ENCODE measurements at regions of chr1 and their contacts with region 1.

Region 1: GRCh38 chr1:6026095-6026809 is 19.4 kb upstream of the KCNAB2 start:
- DNase-seq: peak; percentile 90
- H3K4me3 Mint-ChIP-seq: peak overlapping the region; percentile 97
- H3K27ac Mint-ChIP-seq: peak overlapping the region; percentile 94
- H3K4me1 Mint-ChIP-seq: peaks cover 50% of the 10 kb centered on the region
- H3K27me3 Mint-ChIP-seq: no peaks in the 10 kb centered on the region

Region 2: GRCh38 chr1:5915587-5916571 is 110.4 kb before region 1 on chr1:
- intact Hi-C with region 1: loop called (anchors 1 kb)
- DNase-seq: no peak
- H3K4me3 Mint-ChIP-seq: no peak overlapping the region
- H3K27ac Mint-ChIP-seq: peak overlapping the region; percentile 64
- H3K4me1 Mint-ChIP-seq: peaks cover 9% of the 10 kb centered on the region
- H3K27me3 Mint-ChIP-seq: no peaks in the 10 kb centered on the region

Region 3: DNA sequence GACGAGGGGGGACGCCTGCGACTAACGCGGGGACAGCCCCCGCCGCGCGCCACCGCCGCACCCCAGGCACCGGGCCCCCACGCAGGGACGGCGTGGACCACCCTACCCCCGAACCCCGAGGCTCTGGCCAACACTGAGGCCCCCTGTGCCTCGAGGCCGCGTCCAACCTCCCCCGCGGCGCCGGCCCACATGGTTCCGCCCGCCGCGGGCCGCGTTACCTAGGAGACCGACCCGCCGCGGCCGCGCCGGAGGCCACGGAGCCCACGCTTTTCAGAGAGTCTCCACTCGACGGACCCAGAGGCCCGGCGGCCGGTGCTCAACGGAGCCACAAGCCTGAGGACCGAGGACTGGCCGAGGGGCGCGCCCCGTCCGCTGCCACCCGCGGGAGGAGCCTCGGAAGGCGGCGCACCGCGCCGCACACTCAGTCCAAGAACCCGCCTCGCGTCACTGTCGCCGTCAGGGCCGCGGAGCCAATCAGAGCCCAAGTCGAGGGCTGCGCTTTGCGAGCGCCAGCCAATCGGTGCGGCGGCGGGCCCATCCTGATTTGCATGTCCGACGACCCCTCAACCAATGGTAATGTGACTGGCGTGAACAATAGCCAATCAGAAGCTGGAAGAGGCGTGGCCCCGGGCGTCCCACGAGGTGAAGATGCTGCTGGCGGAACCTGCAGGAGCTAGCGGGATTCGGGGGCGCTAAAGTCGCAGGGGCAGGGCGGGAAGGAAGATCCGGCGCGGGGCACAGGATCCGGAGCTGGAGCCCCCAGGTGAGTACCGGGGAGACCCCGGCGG is 34.0 kb before region 1 on chr1 and contains the start of gene NPHP4:
- intact Hi-C with region 1: loop called (anchors 1 kb)
- DNase-seq: peak; percentile 100
- H3K4me3 Mint-ChIP-seq: peak within 1 kb of the TSS; percentile 95
- H3K27ac Mint-ChIP-seq: peak within 1 kb of the TSS; percentile 98
- H3K4me1 Mint-ChIP-seq: peaks cover 38% of the 10 kb centered on the region
- H3K27me3 Mint-ChIP-seq: no peaks in the 10 kb centered on the region
- total RNA-seq, gene NPHP4: 18.3 and 18.6 TPM in 2 replicates

Region 4: DNA sequence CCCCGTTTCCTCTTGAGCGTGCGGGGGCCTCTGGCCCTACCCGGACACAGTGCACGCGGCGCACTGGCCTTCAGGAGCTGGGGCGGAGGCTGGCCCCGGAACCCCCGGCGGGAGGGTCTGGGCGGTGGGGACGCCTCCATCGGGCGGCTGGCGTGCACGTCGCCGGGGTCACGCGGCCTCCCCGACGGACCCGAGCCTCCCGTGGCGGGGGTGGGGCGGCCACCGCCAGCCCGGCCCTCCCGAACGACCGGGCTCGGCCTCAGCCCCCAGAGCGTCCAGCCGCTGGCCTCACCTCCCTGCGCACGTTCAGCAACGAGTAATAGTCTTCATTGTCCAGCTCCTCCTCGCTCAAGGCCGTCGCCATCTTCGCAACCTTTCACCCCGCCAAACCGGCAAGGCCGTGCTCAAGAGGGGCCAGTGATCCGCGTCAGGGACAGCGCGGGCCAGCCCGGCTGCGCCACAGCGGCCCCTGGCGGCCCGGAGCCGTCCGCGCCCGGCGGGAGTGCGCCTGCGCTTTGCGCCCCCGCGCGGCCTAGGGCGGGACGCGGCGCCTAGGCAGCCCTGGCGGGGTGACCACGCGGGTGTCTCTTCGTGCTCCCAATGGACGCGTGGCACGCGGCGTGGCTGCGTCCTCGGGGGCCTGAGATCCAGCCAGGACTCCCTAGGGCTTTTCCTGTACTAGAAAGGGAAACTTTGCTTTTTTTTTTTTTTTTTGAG is 675.3 kb after region 1 on chr1 and contains the start of gene DNAJC11:
- intact Hi-C with region 1: loop called (anchors 5 kb)
- DNase-seq: peak; percentile 92
- H3K4me3 Mint-ChIP-seq: peak within 1 kb of the TSS; percentile 92
- H3K27ac Mint-ChIP-seq: peak within 1 kb of the TSS; percentile 96
- H3K4me1 Mint-ChIP-seq: peaks cover 27% of the 10 kb centered on the region
- H3K27me3 Mint-ChIP-seq: no peaks in the 10 kb centered on the region
- total RNA-seq, gene DNAJC11: 81.4 and 84.4 TPM in 2 replicates